Motor neuron (in vitro differentiated cells): ENCODE measurements at regions of chr12 and their contacts with region 1.

Region 1: GRCh38 chr12:38316391-38317129 is at the start of gene ALG10B:
- ATAC-seq: peak; percentile 99 to 100 (median 100)
- H3K4me3 ChIP-seq: peak within 1 kb of the TSS; percentile 62 to 87 (median 70)
- H3K27ac ChIP-seq: peak within 1 kb of the TSS; percentile 42 to 89
- H3K4me1 ChIP-seq: peaks cover 2 to 7% of the 10 kb centered on the region in 2 donors
- total RNA-seq, gene ALG10B: 2.2 to 11.1 (median 8.3) TPM

Region 2: DNA sequence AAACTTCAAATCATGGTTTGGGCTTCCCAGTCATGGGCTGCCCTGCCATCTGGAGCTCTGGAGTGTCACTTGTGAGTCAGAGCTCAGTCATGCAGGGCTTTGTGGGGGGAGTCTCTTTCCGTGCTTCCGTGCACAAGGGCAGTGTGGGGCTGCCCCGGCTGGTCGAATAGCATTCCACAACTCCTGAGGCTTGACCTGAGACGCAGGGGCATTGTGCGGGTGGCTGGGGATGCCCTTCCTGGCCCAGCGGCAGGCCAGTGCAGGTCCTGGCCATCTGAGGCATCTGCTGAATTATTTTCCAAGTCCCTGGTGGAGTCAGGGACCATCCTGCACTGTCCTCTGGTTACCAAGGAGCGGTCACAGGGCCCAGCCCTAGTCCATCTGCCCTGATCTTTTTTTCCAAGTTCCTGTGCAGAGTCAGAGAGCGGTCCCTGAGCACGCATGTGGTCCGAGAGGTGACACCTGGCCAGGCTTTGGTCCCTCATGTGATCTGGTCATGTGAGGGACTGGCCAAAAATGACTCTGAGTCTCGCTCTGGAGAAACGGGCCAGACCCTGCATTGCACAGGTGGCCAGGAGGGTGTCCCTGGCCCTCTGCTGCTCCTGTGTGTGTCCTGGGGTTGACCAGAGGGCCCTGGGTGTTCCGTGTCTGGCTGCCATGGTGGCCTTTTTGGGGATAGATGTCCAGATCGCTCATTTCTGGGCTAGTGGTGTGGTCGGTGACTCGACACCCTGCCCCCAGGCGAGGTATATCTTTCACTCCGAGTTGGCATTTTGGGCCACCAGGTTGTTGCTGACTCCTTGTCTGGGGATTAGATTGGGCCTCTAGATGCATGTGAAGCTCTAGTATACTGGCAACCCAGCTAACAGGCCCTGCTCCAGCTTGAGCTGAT is 166.9 kb before region 1 on chr12:
- in situ Hi-C with region 1: loop called in 2 of 9 experiments (anchors 10 kb)
- ATAC-seq: no peak
- H3K4me3 ChIP-seq: no peak overlapping the region
- H3K27ac ChIP-seq: no peak overlapping the region
- H3K4me1 ChIP-seq: no peaks in the 10 kb centered on the region

Region 3: GRCh38 chr12:38258411-38258810 is 58.1 kb before region 1 on chr12:
- in situ Hi-C with region 1: no loop called
- ATAC-seq: no peak
- H3K4me3 ChIP-seq: no peak overlapping the region
- H3K27ac ChIP-seq: no peak overlapping the region
- H3K4me1 ChIP-seq: no peaks in the 10 kb centered on the region

Region 4: GRCh38 chr12:39490500-39491276 is 1174.1 kb after region 1 on chr12:
- in situ Hi-C with region 1: no loop called
- ATAC-seq: peak in 2 of 8 experiments; percentile 98 to 100
- H3K4me3 ChIP-seq: no peak overlapping the region
- H3K27ac ChIP-seq: no peak overlapping the region
- H3K4me1 ChIP-seq: no peaks in the 10 kb centered on the region